Transverse colon (tissue), 4 donors: ENCODE measurements at regions of chr3 and their contacts with region 1.

Region 1: DNA sequence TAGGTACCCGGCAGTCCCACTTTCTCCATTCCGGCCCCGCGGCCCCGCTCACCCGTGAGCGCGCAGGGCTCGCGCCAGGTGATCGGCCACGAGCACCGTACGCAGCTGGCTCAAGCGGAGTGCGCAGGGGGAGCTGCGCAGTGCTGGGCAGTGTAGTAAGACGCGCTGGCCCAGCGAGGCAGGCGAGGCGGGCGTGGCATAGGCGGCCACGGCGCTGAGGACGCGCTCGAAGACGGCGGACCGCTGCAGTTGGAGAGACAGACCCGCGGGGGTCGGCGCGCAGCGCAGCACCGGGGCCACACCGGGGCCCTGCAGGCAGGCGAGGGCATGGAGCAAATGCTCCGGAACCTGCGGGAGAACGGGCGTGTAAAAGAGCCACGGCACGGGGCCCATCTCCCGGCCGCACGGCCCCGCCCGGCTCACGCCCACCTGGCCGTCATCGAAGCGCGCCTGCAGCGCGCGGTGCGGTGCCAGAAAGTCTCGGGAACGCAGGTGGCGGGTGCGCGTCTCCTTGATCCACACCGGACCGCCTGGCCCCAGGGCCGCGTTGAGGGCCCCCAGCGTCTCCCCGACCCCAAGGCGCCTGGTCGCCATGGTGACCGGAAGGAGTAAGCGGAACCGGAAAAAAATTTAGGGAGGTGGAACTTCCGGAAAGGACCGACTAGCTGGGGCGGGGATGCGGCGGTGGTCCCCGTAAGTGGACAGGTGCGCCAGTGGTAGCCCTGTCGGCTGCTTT is at the start of gene DALRD3:
- DNase-seq: peak; percentile 73
- H3K4me3 ChIP-seq: peak within 1 kb of the TSS; percentile 54 to 93 (median 82)
- H3K27ac ChIP-seq: peak within 1 kb of the TSS; percentile 99 to 100 (median 100)
- H3K4me1 ChIP-seq: peaks cover 17 to 45% (median 33%) of the 10 kb centered on the region in 4 donors
- H3K27me3 ChIP-seq: no peaks in the 10 kb centered on the region
- CTCF ChIP-seq: no peak
- EP300 ChIP-seq: no peak
- POLR2A ChIP-seq: peak; percentile 73
- total RNA-seq, gene DALRD3: 30.4 to 136 (median 42.0) TPM

Region 2: GRCh38 chr3:48966876-48967361 is 51.2 kb before region 1 on chr3:
- in situ Hi-C with region 1: no loop called
- intact Hi-C with region 1: loop called (anchors 1 kb)
- DNase-seq: peak; percentile 41
- H3K4me3 ChIP-seq: no peak overlapping the region
- H3K27ac ChIP-seq: peak overlapping the region in 3 of 4 donors; percentile 24 to 53 (median 40)
- H3K4me1 ChIP-seq: peaks cover 0 to 30% (median 13%) of the 10 kb centered on the region in 4 donors
- H3K27me3 ChIP-seq: no peaks in the 10 kb centered on the region
- CTCF ChIP-seq: no peak
- EP300 ChIP-seq: no peak
- POLR2A ChIP-seq: no peak

Region 3: GRCh38 chr3:49007068-49007770 is 10.9 kb before region 1 on chr3 and contains the start of gene WDR6:
- in situ Hi-C with region 1: no loop called
- intact Hi-C with region 1: loop called (anchors 1 kb)
- DNase-seq: peak; percentile 98
- H3K4me3 ChIP-seq: peak within 1 kb of the TSS; percentile 62 to 97 (median 78)
- H3K27ac ChIP-seq: peak within 1 kb of the TSS; percentile 95 to 99 (median 96)
- H3K4me1 ChIP-seq: peaks cover 12 to 25% (median 19%) of the 10 kb centered on the region in 4 donors
- H3K27me3 ChIP-seq: no peaks in the 10 kb centered on the region
- CTCF ChIP-seq: peak; percentile 27 to 77 (median 46)
- EP300 ChIP-seq: no peak
- POLR2A ChIP-seq: peak; percentile 84
- total RNA-seq, gene WDR6: 76.0 to 162 (median 146) TPM

Region 4: GRCh38 chr3:49093853-49094767 is 76.0 kb after region 1 on chr3 and contains the start of gene QRICH1:
- in situ Hi-C with region 1: no loop called
- intact Hi-C with region 1: loop called (anchors 2 kb)
- DNase-seq: peak; percentile 97
- H3K4me3 ChIP-seq: peak within 1 kb of the TSS; percentile 69 to 100 (median 84)
- H3K27ac ChIP-seq: peak within 1 kb of the TSS; percentile 90 to 99 (median 98)
- H3K4me1 ChIP-seq: peaks cover 21 to 49% (median 30%) of the 10 kb centered on the region in 4 donors
- H3K27me3 ChIP-seq: no peaks in the 10 kb centered on the region
- CTCF ChIP-seq: peak; percentile 46 to 61 (median 50)
- EP300 ChIP-seq: no peak
- POLR2A ChIP-seq: peak; percentile 76
- total RNA-seq, gene QRICH1: 76.4 to 122 (median 84.7) TPM